HEK293 (cell line): ENCODE measurements at regions of chr2 and their contacts with region 1.

Region 1: GRCh38 chr2:63899639-63900038 is 57.9 kb downstream of the UGP2 start:
- H3K4me3 ChIP-seq: no peak overlapping the region
- H3K27ac ChIP-seq: no peak overlapping the region
- H3K4me1 ChIP-seq: no peaks in the 10 kb centered on the region
- CTCF ChIP-seq: no peak

Region 2: GRCh38 chr2:63888490-63889402 is 10.9 kb before region 1 on chr2:
- CTCF ChIA-PET with region 1: interaction called, 14 read pairs
- POLR2A ChIA-PET with region 1: no interaction called
- H3K4me3 ChIP-seq: no peak overlapping the region
- H3K27ac ChIP-seq: no peak overlapping the region
- H3K4me1 ChIP-seq: no peaks in the 10 kb centered on the region
- CTCF ChIP-seq: peak; percentile 61; the same call in 1 of the 2 replicates